ENCODE measurements at regions of chr7 and their contacts with region 1.

Region 1: GRCh38 chr7:135281363-135281949 is 47.8 kb downstream of the STRA8 start:
- H3K4me3 Mint-ChIP-seq: no peak overlapping the region
- H3K27ac Mint-ChIP-seq: no peak overlapping the region
- H3K4me1 Mint-ChIP-seq: peaks cover 7% of the 10 kb centered on the region
- H3K27me3 Mint-ChIP-seq: peaks cover 17% of the 10 kb centered on the region

Region 2: DNA sequence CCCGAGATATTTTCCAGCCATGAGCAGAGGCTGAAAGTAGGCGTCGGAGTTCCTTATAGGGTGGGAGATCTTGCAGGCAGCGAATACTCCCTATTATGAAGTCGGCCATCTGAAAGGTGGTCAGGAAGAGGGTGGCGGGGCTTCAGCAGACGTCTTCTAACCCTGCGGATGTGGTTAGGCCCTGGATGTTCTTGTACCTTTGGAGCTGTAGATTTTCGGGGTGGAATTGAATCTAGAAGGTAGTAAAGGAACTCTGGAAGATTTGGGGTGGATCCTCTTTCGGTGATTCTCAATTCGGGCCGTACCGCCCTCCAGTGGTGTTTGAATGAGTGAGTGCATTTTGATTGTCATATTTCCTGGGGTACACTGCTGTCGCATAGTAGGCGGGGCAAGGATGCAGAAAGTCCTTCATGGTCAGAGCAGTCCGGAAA is 276.9 kb after region 1 on chr7:
- intact Hi-C with region 1: loop called (anchors 2 kb)
- H3K4me3 Mint-ChIP-seq: no peak overlapping the region
- H3K27ac Mint-ChIP-seq: no peak overlapping the region
- H3K4me1 Mint-ChIP-seq: peaks cover 29% of the 10 kb centered on the region
- H3K27me3 Mint-ChIP-seq: no peaks in the 10 kb centered on the region

Region 3: GRCh38 chr7:135575296-135575695 is 293.8 kb after region 1 on chr7:
- intact Hi-C with region 1: loop called (anchors 5 kb)
- H3K4me3 Mint-ChIP-seq: no peak overlapping the region
- H3K27ac Mint-ChIP-seq: no peak overlapping the region
- H3K4me1 Mint-ChIP-seq: peaks cover 5% of the 10 kb centered on the region
- H3K27me3 Mint-ChIP-seq: no peaks in the 10 kb centered on the region

Region 4: GRCh38 chr7:135645296-135645904 is 363.9 kb after region 1 on chr7:
- intact Hi-C with region 1: loop called (anchors 5 kb)
- H3K4me3 Mint-ChIP-seq: no peak overlapping the region
- H3K27ac Mint-ChIP-seq: no peak overlapping the region
- H3K4me1 Mint-ChIP-seq: peaks cover 3% of the 10 kb centered on the region
- H3K27me3 Mint-ChIP-seq: no peaks in the 10 kb centered on the region

Measured in dendritic cell treated with granulocyte-macrophage colony-stimulating factor and Interleukin-4, amounts not matched to agents 40 ng/mL and 50 ng/mL, for 4 days (primary cell).